Activated CD8-positive, alpha-beta T cell treated with anti-CD3 and anti-CD28 coated beads for 36 hours (primary cell): ENCODE measurements at regions of chr15 and their contacts with region 1.

Region 1: DNA sequence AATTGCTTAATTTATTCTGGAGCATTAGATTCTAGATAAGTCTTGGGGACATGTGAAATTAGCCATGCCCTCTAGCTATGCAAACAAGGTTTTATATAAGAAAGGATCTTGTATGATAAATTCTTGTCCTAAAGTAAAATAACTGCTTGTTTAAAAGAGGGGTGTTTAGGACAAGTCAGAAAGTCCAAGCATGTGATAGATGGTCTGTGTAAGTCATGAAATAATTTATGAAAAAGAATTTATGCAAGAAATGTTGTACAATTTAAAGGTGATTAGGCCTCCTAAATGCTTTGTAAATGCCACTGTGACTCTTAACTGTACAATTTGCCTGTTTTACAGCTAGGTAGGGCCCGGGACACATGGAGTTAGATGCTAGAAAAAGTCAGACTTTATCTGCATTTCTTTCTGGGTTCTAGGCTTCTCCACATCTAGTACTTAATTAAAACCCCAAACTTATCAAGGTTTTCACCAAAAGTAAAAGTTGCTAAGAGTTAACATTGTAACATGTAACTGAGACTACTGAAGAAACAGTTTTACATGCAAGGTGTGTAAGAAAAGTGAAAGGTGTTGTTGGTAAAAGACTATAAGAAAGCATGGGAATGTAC is 13.2 kb downstream of the LINS1 start:
- DNase-seq: no peak
- ATAC-seq: no peak
- H3K4me3 Mint-ChIP-seq: no peak overlapping the region
- H3K27ac Mint-ChIP-seq: no peak overlapping the region
- H3K4me1 Mint-ChIP-seq: peaks cover 58% of the 10 kb centered on the region
- H3K27me3 Mint-ChIP-seq: no peaks in the 10 kb centered on the region
- CTCF ChIP-seq: no peak

Region 2: GRCh38 chr15:100553468-100553867 is 35.3 kb before region 1 on chr15:
- CTCF ChIA-PET with region 1: no interaction called
- POLR2A ChIA-PET with region 1: no interaction called
- intact Hi-C with region 1: no loop called
- DNase-seq: no peak
- ATAC-seq: no peak
- H3K4me3 Mint-ChIP-seq: no peak overlapping the region
- H3K27ac Mint-ChIP-seq: no peak overlapping the region
- H3K4me1 Mint-ChIP-seq: no peaks in the 10 kb centered on the region
- H3K27me3 Mint-ChIP-seq: no peaks in the 10 kb centered on the region
- CTCF ChIP-seq: no peak

Region 3: GRCh38 chr15:100572362-100572983 is 16.3 kb before region 1 on chr15:
- CTCF ChIA-PET with region 1: interaction called, 19 read pairs
- POLR2A ChIA-PET with region 1: no interaction called
- intact Hi-C with region 1: no loop called
- DNase-seq: no peak
- ATAC-seq: no peak
- H3K4me3 Mint-ChIP-seq: no peak overlapping the region
- H3K27ac Mint-ChIP-seq: no peak overlapping the region
- H3K4me1 Mint-ChIP-seq: peaks cover 44% of the 10 kb centered on the region
- H3K27me3 Mint-ChIP-seq: no peaks in the 10 kb centered on the region
- CTCF ChIP-seq: peak; percentile 57

Region 4: GRCh38 chr15:100602064-100602822 is 13.5 kb after region 1 on chr15 and contains the starts of genes ASB7 and LINS1:
- CTCF ChIA-PET with region 1: interaction called, 3 read pairs
- POLR2A ChIA-PET with region 1: interaction called, 13 read pairs
- intact Hi-C with region 1: no loop called
- DNase-seq: peak; percentile 99
- ATAC-seq: peak; percentile 87
- H3K4me3 Mint-ChIP-seq: no peak within 1 kb of the TSS
- H3K27ac Mint-ChIP-seq: no peak within 1 kb of the TSS
- H3K4me1 Mint-ChIP-seq: peaks cover 58% of the 10 kb centered on the region
- H3K27me3 Mint-ChIP-seq: no peaks in the 10 kb centered on the region
- CTCF ChIP-seq: no peak
- total RNA-seq, gene ASB7: 15.7 to 18.4 TPM
- total RNA-seq, gene LINS1: 28.7 to 29.4 TPM

Region 5: GRCh38 chr15:100612539-100612938 is 23.8 kb after region 1 on chr15:
- CTCF ChIA-PET with region 1: no interaction called
- POLR2A ChIA-PET with region 1: no interaction called
- intact Hi-C with region 1: no loop called
- DNase-seq: no peak
- ATAC-seq: no peak
- H3K4me3 Mint-ChIP-seq: no peak overlapping the region
- H3K27ac Mint-ChIP-seq: no peak overlapping the region
- H3K4me1 Mint-ChIP-seq: peaks cover 15% of the 10 kb centered on the region
- H3K27me3 Mint-ChIP-seq: no peaks in the 10 kb centered on the region
- CTCF ChIP-seq: no peak